H1 (cell line): ENCODE measurements at regions of chr14 and their contacts with region 1.

Region 1: GRCh38 chr14:50106178-50106577 is 10.2 kb downstream of the VCPKMT start:
- DNase-seq: no peak
- H3K4me3 ChIP-seq: no peak overlapping the region
- H3K27ac ChIP-seq: no peak overlapping the region
- H3K4me1 ChIP-seq: no peaks in the 10 kb centered on the region; a peak in 1 of 7 replicates
- H3K27me3 ChIP-seq: no peaks in the 10 kb centered on the region
- CTCF ChIP-seq: no peak
- EP300 ChIP-seq: no peak
- POLR2A ChIP-seq: 0 out of 3 replicates have a peak, but pooled peaks of 1 of the 2 experiments have one; percentile 15
- RAD21 ChIP-seq: no peak

Region 2: GRCh38 chr14:49879683-49880204 is 226.4 kb before region 1 on chr14:
- CTCF ChIA-PET with region 1: interaction called, 16 read pairs
- POLR2A ChIA-PET with region 1: interaction called, 4 read pairs
- DNase-seq: peak; percentile 61 to 67
- H3K4me3 ChIP-seq: no peak overlapping the region
- H3K27ac ChIP-seq: no peak overlapping the region
- H3K4me1 ChIP-seq: peaks cover 2 to 8% (median 7%) of the 10 kb centered on the region in 4 experiments; a peak in 5 of 7 replicates
- H3K27me3 ChIP-seq: no peaks in the 10 kb centered on the region
- CTCF ChIP-seq: peak; percentile 63 to 93 (median 86)
- EP300 ChIP-seq: no peak
- POLR2A ChIP-seq: no peak
- RAD21 ChIP-seq: peak; percentile 63 to 80

Region 3: DNA sequence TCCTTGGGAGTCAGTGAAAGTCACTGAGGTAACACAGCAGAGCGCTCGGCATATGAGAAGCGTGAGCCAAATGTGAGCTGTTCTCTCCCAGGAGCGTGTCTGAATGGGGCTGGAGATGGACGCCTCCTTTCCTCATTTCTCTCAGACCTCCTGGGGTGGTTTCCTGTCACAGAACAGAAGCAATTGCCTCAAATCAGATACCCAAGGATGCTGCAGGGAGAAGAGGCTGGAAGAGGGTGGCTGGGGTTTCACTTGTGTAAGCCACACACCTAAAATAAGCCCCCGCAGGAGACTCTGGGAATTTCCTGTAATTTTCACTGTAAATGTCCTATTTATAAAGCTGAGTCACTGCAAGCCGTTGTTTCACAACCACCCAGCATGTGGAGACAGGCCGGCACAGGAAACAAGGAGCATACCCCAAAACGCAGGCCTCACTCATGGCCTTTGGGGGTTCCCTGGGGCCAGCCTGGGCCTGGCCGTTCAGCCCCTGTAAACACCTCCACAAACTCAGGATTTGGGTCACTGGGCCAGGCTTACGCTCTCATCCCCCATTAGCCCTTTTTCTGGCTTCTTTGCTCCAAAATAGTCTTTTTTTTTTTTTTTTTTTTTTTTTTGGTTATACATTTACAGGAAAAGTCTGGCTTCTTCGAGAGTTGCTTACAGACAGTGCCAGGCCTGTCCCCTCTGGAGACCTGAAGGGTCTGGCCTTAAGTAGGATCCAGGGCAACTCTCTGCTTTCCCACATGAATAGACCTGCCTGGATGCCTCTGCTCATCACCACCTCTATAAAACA is 45.1 kb before region 1 on chr14:
- CTCF ChIA-PET with region 1: interaction called, 10 read pairs
- POLR2A ChIA-PET with region 1: no interaction called
- DNase-seq: no peak
- H3K4me3 ChIP-seq: no peak overlapping the region
- H3K27ac ChIP-seq: no peak overlapping the region
- H3K4me1 ChIP-seq: peaks cover 5 to 13% (median 9%) of the 10 kb centered on the region in 4 experiments; a peak in 6 of 7 replicates
- H3K27me3 ChIP-seq: no peaks in the 10 kb centered on the region; a peak in 1 of 7 replicates
- CTCF ChIP-seq: peak in 1 of 3 experiments; percentile 3; a peak in 1 of 4 replicates
- EP300 ChIP-seq: no peak
- POLR2A ChIP-seq: no peak
- RAD21 ChIP-seq: peak in 1 of 2 experiments; percentile 3; a peak in 1 of 4 replicates

Region 4: GRCh38 chr14:50095895-50096294 is 10.3 kb before region 1 on chr14:
- CTCF ChIA-PET with region 1: interaction called, 47 read pairs
- POLR2A ChIA-PET with region 1: interaction called, 10 read pairs
- DNase-seq: no peak
- H3K4me3 ChIP-seq: no peak overlapping the region
- H3K27ac ChIP-seq: no peak overlapping the region
- H3K4me1 ChIP-seq: peaks cover 0 to 5% (median 3%) of the 10 kb centered on the region in 4 experiments; a peak in 3 of 7 replicates
- H3K27me3 ChIP-seq: no peaks in the 10 kb centered on the region; a peak in 1 of 7 replicates
- CTCF ChIP-seq: no peak
- EP300 ChIP-seq: no peak
- POLR2A ChIP-seq: no peak
- RAD21 ChIP-seq: no peak

Region 5: DNA sequence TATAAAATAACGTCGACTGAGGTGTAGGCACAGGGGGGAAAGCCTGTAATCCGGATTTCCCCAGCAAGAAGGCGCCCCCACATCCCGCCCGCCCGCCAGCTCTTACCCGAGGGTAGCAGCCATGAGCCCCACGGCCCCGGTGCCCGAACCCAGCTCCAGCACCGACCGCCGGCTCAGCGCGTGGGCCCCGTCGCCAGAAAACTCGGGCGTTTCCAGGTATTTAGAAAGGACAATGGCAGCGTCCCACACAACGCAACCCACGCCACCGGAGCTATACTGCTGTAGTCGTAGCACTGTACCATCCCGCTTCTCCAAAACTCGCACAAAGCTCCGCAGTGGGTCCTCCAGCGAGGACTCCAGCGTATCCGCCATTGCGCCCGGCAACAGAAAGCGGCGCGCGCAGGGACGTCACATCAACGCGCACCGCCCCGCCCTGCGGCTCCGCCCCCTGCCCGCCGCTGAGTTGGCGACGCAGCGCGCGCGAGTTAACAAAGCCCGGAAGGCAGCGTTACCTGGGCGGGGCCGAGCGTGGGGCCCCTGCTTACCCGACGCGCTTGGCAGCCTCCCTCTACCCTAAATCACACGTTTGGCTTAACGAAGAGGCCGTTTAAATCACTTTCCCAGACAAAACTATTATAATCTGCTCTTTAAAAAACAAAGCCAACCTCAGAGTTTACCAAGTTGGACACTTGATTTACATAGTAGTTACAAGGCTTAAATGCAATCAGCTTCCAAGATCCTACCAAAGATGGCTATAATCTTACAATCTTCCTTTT is 10.2 kb after region 1 on chr14 and contains the start of gene VCPKMT:
- CTCF ChIA-PET with region 1: interaction called, 8 read pairs
- POLR2A ChIA-PET with region 1: interaction called, 27 read pairs
- DNase-seq: peak; percentile 66 to 95
- H3K4me3 ChIP-seq: peak within 1 kb of the TSS; percentile 93 to 97 (median 96)
- H3K27ac ChIP-seq: peak within 1 kb of the TSS; percentile 88
- H3K4me1 ChIP-seq: peaks cover 0 to 6% (median 3%) of the 10 kb centered on the region in 4 experiments; a peak in 3 of 7 replicates
- H3K27me3 ChIP-seq: no peaks in the 10 kb centered on the region
- CTCF ChIP-seq: no peak
- EP300 ChIP-seq: no peak
- POLR2A ChIP-seq: peak; percentile 97 to 98
- RAD21 ChIP-seq: no peak
- total RNA-seq, gene VCPKMT: 7.1 and 8.9 TPM in 2 replicates